Activated CD4-positive, alpha-beta T cell treated with anti-CD3 and anti-CD28 coated beads for 36 hours (primary cell): ENCODE measurements at regions of chr7 and their contacts with region 1.

Region 1: GRCh38 chr7:21579341-21580072 is 36.7 kb downstream of the DNAH11 start:
- DNase-seq: no peak
- ATAC-seq: peak; percentile 49
- H3K4me3 Mint-ChIP-seq: no peak overlapping the region
- H3K27ac Mint-ChIP-seq: peak overlapping the region; percentile 6
- H3K4me1 Mint-ChIP-seq: peaks cover 6% of the 10 kb centered on the region
- H3K27me3 Mint-ChIP-seq: peaks cover 5% of the 10 kb centered on the region

Region 2: GRCh38 chr7:21767300-21767900 is 187.9 kb after region 1 on chr7:
- CTCF ChIA-PET with region 1: no interaction called
- POLR2A ChIA-PET with region 1: no interaction called
- intact Hi-C with region 1: loop called in 1 of 2 experiments (anchors 5 kb)
- DNase-seq: peak; percentile 49
- ATAC-seq: peak; percentile 84
- H3K4me3 Mint-ChIP-seq: no peak overlapping the region
- H3K27ac Mint-ChIP-seq: no peak overlapping the region
- H3K4me1 Mint-ChIP-seq: peaks cover 14% of the 10 kb centered on the region
- H3K27me3 Mint-ChIP-seq: no peaks in the 10 kb centered on the region